Endothelial cell of umbilical vein (primary cell): ENCODE measurements at regions of chrX and their contacts with region 1.

Region 1: DNA sequence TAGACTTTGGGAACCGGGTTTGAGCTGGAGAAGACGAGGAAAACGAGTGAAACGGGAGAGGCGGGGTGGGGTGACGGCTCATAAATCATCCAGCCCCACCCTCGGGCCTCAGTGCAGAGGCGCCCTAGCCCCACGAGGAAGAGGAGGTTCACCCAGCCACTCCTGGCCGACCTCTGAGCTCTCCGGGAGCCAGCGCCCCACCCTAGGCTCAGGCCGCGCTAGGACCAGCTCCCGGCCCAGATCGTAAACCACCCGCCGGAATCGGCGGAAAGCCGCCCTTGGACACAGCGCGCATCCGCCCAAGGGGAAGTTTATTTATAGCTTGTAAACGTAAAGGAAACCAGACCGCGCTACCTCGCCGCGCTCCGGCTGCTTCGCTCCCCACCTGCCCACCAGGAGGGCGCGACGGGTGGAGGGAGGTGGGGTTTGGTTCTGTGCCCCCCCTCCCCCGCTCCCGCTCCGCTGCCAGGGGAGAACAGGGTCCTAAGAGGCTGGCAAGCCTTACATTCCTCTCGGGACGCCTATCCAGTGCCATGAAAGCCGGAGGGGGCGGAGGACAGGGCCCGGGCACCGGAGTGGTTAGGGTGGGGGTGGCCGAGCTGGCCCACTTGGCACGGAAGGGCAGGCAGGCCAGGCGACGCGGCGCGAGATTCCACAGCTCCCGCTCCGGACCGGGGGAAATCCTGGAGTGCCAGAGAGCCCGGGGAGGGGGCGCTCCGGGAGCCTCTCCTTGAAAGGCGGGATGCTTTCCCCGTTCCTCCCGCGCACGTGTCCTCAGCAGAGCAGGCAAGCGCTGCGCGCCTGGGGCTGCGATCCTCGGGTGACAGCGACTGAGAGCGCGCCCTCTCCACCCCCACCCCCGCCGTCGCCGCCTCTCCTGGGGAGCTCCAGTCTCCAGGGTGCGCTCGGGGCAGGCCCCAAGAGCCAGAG is 84.2 kb downstream of the BCOR start:
- DNase-seq: peak; percentile 68
- H3K4me3 ChIP-seq: peak overlapping the region; percentile 4 to 41 (median 33)
- H3K27ac ChIP-seq: peak overlapping the region; percentile 89
- H3K4me1 ChIP-seq: peaks cover 26% of the 10 kb centered on the region
- H3K27me3 ChIP-seq: no peaks in the 10 kb centered on the region
- CTCF ChIP-seq: peak in 1 of 2 donors; percentile 11
- POLR2A ChIP-seq: no peak

Region 2: DNA sequence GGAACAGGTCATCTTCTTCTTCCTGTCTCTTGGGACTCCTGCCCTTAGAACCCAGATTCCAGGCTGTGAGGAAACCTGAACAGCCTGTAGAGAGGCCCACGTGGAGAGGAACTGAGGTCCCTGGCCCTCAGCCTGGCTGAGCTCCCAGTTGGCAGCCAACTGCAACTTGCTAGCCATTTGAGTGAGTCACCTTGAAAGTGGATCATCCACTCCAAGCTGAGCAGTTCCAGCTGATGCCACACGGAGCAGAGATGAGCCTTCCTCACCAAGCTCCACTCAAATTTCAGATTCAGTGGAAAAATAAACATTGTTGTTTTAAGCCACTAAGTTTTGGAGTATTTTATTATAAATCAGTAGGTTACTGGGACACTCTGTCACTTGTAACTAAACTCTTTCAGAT is 308.2 kb before region 1 on chrX:
- CTCF ChIA-PET with region 1: no interaction called
- POLR2A ChIA-PET with region 1: no interaction called
- dilution Hi-C with region 1: no loop called
- intact Hi-C with region 1: loop called (anchors 1 kb)
- DNase-seq: peak; percentile 88
- H3K4me3 ChIP-seq: no peak overlapping the region
- H3K27ac ChIP-seq: no peak overlapping the region
- H3K4me1 ChIP-seq: no peaks in the 10 kb centered on the region
- H3K27me3 ChIP-seq: no peaks in the 10 kb centered on the region
- CTCF ChIP-seq: peak; percentile 29 to 48
- POLR2A ChIP-seq: no peak

Region 3: DNA sequence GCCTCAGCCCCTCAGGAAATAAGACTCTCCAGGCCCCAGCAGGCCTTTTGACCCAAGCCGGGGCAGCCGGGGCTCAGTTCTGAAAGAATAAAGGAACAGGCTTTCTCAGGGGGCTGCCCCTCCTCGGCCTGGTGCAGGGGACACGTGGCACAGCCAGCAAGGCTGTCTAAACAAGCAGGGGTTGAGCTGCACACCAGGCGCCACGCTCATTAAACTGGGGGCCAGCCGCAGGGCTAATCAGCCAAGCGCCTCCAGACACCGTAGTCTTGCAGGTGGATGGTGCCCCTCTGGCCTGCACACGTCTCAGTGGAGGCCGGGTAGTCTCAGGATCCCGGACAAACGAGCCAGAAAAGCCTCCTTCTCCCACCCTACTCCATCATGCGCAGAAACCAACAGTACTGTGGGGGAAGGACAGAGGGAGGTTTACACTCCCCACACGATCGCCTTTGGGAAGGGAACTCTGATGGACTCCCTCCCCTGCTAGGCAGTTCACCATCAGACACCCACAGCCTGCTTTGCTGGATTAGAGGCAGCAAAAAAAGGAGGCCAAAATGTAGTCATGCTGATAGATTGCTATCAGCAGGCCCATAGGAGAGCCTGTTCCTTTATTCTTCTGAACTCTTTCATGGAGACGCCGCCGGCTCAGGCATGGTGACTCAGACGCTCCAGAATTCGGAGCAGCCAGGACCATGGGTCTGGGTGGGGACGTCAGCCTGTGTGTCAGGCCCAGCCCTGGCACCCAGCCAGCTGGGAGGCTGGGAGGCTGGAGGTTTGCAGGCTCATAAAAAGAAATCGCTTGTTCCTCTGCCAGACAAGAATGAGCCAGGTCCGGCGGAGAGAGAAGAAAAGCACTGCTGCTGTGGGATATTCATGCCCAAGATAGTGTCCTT is 258.1 kb before region 1 on chrX:
- CTCF ChIA-PET with region 1: no interaction called
- POLR2A ChIA-PET with region 1: interaction called, 3 read pairs
- dilution Hi-C with region 1: no loop called
- intact Hi-C with region 1: loop called (anchors 2 kb)
- DNase-seq: peak; percentile 92
- H3K4me3 ChIP-seq: no peak overlapping the region
- H3K27ac ChIP-seq: peak overlapping the region; percentile 95
- H3K4me1 ChIP-seq: peaks cover 64% of the 10 kb centered on the region
- H3K27me3 ChIP-seq: no peaks in the 10 kb centered on the region
- CTCF ChIP-seq: no peak
- POLR2A ChIP-seq: no peak

Region 4: GRCh38 chrX:39907964-39908616 is 105.4 kb before region 1 on chrX:
- CTCF ChIA-PET with region 1: interaction called, 3 read pairs
- POLR2A ChIA-PET with region 1: interaction called, 3 read pairs
- dilution Hi-C with region 1: no loop called
- intact Hi-C with region 1: loop called (anchors 2 kb)
- DNase-seq: peak; percentile 45
- H3K4me3 ChIP-seq: no peak overlapping the region
- H3K27ac ChIP-seq: peak overlapping the region; percentile 72
- H3K4me1 ChIP-seq: peaks cover 21% of the 10 kb centered on the region
- H3K27me3 ChIP-seq: no peaks in the 10 kb centered on the region
- CTCF ChIP-seq: no peak
- POLR2A ChIP-seq: no peak

Region 5: DNA sequence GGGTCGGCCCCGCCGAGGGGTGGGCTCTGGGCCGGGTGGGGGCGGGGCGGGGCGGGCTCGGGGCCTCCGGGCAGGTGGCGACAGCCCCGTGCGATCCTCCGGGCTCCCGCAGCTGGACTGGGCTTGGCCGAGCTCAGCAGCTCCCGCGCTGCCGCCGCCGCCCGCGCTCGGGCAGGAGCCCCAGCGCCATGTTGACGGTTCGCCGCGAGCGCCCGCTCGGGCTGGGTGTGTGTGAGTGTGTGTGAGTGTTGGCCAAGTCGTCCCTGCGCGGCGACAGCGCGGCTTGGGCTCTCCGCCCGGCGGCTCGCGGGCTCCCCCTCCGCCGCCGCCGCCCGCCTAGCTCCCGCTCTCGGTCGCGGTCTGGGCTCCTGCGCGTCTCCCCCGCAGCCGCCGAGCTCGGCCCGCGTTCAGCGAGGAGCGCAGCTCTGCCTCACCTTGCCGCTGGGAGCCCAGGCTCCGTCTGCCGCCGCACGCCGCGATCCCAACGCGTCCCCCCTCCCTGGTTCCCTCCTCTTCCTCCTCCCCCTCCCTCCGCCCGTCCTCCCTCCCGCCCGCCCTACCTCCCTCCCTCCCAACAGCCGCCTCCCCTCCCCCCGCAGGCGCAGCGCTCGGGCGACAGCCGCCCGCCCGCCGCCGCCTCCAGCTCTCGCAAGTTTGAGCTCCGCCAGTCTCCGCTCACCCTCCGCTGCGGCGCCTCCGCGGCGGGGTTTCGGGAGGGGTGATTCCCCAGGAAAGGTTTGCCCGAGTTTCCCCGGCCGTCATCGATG is 84.1 kb after region 1 on chrX and contains the start of gene BCOR:
- CTCF ChIA-PET with region 1: interaction called, 4 read pairs
- POLR2A ChIA-PET with region 1: no interaction called
- dilution Hi-C with region 1: no loop called
- intact Hi-C with region 1: loop called (anchors 2 kb)
- DNase-seq: peak; percentile 51
- H3K4me3 ChIP-seq: peak within 1 kb of the TSS; percentile 55 to 72 (median 59)
- H3K27ac ChIP-seq: peak within 1 kb of the TSS; percentile 41
- H3K4me1 ChIP-seq: peaks cover 12% of the 10 kb centered on the region
- H3K27me3 ChIP-seq: no peaks in the 10 kb centered on the region
- CTCF ChIP-seq: no peak
- POLR2A ChIP-seq: peak; percentile 74
- total RNA-seq, gene BCOR: 23.9 and 24.2 TPM in 2 replicates

Region 6: DNA sequence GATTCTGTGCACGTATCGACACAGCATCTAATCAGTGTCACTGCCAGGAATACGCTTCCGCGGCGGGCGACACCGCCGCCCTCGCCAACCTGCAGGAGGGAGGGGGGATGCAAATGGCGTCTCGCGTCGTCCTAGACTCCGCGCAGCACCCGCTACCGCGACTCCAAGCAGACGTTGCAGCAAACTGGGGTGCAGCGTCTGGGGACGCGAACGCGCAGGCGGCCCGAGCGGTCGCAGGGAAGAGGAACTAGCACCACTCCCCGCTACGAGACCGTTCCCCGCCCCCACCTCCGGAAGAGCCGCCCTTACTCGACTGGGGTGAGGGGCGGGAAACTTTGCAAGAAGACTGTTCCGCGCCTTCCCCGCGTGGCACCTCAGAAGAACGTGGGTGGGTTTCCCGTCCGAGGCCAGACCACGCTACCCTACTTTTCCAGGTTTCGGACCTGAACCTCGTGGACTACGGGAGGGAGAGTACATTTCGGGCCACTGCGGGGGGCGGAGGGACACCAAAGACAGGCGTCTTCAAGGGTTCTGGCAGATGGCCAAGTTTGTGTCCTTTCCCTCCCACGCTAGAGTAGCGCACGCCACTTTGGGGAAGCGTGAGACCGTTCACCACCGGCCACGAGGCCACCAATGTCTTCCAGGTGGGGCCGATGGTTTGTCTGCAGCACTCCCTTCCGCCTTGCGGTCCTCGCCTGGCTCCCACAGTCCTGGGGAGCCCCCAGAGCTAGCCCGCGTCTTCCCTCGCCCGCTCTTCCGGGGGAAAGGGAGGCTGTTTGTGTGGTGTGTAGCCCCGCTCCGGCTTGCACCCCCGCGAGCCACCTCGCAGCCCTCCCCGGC is 162.2 kb after region 1 on chrX:
- CTCF ChIA-PET with region 1: no interaction called
- POLR2A ChIA-PET with region 1: no interaction called
- dilution Hi-C with region 1: no loop called
- intact Hi-C with region 1: loop called (anchors 1 kb)
- DNase-seq: peak; percentile 42
- H3K4me3 ChIP-seq: peak overlapping the region; percentile 6 to 49 (median 36)
- H3K27ac ChIP-seq: peak overlapping the region; percentile 66
- H3K4me1 ChIP-seq: peaks cover 39% of the 10 kb centered on the region
- H3K27me3 ChIP-seq: no peaks in the 10 kb centered on the region
- CTCF ChIP-seq: no peak
- POLR2A ChIP-seq: peak; percentile 33

Region 7: DNA sequence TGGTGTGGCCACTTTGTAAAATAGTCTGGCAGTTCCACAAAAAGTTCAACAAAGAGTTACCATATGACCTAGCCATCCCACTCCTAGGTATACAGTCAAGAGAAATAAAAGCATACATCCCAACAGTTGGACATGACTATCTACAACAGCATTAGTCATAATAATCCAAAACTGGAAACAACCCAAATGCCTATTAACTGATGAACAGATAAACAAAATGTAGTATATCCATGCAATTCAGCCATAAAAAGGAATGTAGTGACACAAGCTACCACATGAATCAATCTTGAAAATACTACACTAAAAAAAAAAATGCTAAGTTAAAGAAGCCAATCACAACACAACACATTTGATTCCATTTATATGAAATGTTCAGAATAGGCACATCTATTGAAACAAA is 705.7 kb after region 1 on chrX:
- CTCF ChIA-PET with region 1: no interaction called
- POLR2A ChIA-PET with region 1: no interaction called
- dilution Hi-C with region 1: no loop called
- intact Hi-C with region 1: no loop called
- DNase-seq: peak; percentile 46
- H3K4me3 ChIP-seq: no peak overlapping the region
- H3K27ac ChIP-seq: no peak overlapping the region
- H3K4me1 ChIP-seq: peaks cover 3% of the 10 kb centered on the region
- H3K27me3 ChIP-seq: no peaks in the 10 kb centered on the region
- CTCF ChIP-seq: no peak
- POLR2A ChIP-seq: no peak